ENCODE measurements at regions of chr7 and their contacts with region 1.

Region 1: GRCh38 chr7:35624299-35625186 is 70.4 kb downstream of the HERPUD2 start:
- DNase-seq: peak in 7 of 9 experiments; percentile 19 to 68 (median 37)
- ATAC-seq: peak; percentile 89
- H3K4me3 ChIP-seq: no peak overlapping the region
- H3K4me3 Mint-ChIP-seq: no peak overlapping the region
- H3K27ac ChIP-seq: no peak overlapping the region
- H3K27ac Mint-ChIP-seq: no peak overlapping the region
- H3K4me1 ChIP-seq: no peaks in the 10 kb centered on the region
- H3K4me1 Mint-ChIP-seq: peaks cover 3% of the 10 kb centered on the region
- H3K27me3 ChIP-seq: no peaks in the 10 kb centered on the region
- H3K27me3 Mint-ChIP-seq: no peaks in the 10 kb centered on the region
- CTCF ChIP-seq: peak; percentile 79

Region 2: DNA sequence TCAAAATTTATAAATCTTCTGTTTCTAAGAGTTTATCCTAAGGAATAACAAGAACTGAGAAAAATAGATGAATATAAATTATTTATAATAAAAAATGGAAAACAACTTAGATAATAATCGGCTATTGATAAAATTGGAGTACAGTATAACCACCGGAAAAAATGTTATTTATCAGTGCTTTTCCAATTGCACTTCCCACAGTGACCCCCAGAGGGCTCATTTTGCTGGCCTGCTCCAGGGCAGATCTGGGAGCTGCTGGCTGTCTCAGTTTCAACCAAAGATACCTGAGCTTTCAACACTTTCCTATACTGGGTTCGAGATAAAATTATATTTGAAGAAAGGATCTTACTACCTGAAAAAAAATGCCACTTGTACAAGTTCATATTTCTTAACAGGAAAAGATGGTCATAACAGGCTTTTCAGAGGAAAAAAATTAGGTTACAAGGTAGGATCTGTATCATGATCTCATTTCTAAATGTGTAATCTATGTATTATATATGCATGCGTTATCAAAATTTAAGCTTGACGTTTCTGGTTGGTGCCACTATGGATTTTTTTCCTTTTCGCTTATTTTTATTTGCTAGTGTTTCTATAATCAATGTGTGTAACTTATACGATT is 800.8 kb before region 1 on chr7:
- CTCF ChIA-PET with region 1: no interaction called
- POLR2A ChIA-PET with region 1: no interaction called
- intact Hi-C with region 1: loop called in 1 of 2 experiments (anchors 5 kb)
- DNase-seq: peak; percentile 15 to 67 (median 48)
- ATAC-seq: peak; percentile 56
- H3K4me3 ChIP-seq: no peak overlapping the region
- H3K4me3 Mint-ChIP-seq: no peak overlapping the region
- H3K27ac ChIP-seq: no peak overlapping the region
- H3K27ac Mint-ChIP-seq: no peak overlapping the region
- H3K4me1 ChIP-seq: no peaks in the 10 kb centered on the region
- H3K4me1 Mint-ChIP-seq: no peaks in the 10 kb centered on the region
- H3K27me3 ChIP-seq: no peaks in the 10 kb centered on the region
- H3K27me3 Mint-ChIP-seq: no peaks in the 10 kb centered on the region
- CTCF ChIP-seq: peak; percentile 84

Region 3: DNA sequence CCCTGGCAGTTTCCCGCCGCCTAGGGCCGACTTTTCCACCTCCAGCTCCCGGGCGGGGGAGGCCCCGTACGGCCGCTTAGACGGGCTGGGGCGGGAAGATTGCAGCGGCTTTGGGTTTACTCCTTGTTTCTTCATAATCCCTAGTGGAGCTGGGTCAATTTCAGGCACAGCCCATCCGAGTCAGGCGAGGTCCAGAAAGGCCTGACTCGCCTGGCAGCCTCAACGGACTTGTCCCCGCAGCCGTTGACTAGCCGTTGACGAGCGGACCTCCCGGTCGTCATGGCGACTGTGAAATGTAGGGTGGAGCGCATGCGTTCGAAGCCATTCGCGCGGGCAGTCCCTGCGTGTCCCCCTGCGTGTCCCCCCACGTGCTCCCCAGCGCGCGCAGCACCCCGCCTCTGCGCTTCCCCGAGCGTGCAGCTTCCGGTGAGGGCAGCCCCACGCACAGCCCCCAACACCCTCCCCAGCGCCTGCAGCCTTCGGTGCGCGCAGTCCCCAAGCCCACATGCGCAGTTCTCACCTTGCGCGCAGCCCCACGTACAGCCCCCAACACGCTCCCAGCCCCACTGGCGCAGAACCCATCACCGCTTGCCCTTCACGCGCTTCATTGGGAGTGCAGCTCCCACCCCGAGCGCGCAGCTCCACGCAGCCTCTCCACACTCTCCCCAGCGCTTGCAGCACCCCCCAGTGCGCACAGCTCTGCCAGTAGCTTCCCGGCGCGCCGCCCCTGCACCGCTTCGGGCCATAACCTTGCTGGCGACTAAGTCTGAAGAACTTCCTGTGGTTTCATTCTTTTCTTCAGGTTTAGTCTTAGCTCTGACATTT is 438.4 kb before region 1 on chr7:
- CTCF ChIA-PET with region 1: no interaction called
- POLR2A ChIA-PET with region 1: no interaction called
- intact Hi-C with region 1: loop called in 1 of 2 experiments (anchors 10 kb)
- DNase-seq: peak in 1 of 9 experiments; percentile 5
- ATAC-seq: no peak
- H3K4me3 ChIP-seq: no peak overlapping the region
- H3K4me3 Mint-ChIP-seq: peak overlapping the region; percentile 56
- H3K27ac ChIP-seq: no peak overlapping the region
- H3K27ac Mint-ChIP-seq: no peak overlapping the region
- H3K4me1 ChIP-seq: no peaks in the 10 kb centered on the region
- H3K4me1 Mint-ChIP-seq: peaks cover 8% of the 10 kb centered on the region
- H3K27me3 ChIP-seq: no peaks in the 10 kb centered on the region
- H3K27me3 Mint-ChIP-seq: peaks cover 15% of the 10 kb centered on the region
- CTCF ChIP-seq: no peak

Region 4: DNA sequence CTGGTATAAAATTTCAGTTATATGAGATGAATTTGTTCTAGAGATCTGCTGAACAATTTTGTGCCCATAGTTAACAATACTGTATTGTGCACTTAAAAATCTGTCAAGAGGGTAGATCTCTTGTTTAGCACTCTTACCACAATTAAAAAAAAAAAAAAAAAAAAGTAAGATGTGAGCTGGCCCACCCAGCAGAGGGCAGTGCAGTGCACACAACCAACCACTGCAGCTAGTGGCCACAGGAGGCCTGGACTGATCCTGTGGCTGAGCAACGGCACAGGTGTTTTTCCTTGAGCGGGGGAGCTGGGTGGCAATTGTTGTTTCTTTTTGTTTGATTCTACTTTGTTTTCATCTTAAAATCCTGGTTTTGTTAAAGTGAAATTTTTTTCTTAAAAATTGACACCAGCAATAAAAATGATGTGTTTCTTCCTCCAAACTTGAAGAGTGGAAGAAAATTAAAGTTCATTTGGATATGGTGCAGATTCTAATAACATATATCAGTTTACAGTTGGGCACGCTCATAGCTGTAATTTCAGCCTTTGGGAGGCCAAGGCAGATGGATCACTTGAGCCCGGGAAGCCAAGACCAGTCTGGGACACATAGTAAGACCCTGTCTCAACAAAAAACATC is 199.6 kb before region 1 on chr7:
- CTCF ChIA-PET with region 1: interaction called, 6 read pairs
- POLR2A ChIA-PET with region 1: no interaction called
- intact Hi-C with region 1: loop called (anchors 1 to 2 kb)
- DNase-seq: peak; percentile 9 to 74 (median 56)
- ATAC-seq: peak; percentile 86
- H3K4me3 ChIP-seq: no peak overlapping the region
- H3K4me3 Mint-ChIP-seq: no peak overlapping the region
- H3K27ac ChIP-seq: no peak overlapping the region
- H3K27ac Mint-ChIP-seq: no peak overlapping the region
- H3K4me1 ChIP-seq: no peaks in the 10 kb centered on the region
- H3K4me1 Mint-ChIP-seq: no peaks in the 10 kb centered on the region
- H3K27me3 ChIP-seq: no peaks in the 10 kb centered on the region
- H3K27me3 Mint-ChIP-seq: peaks cover 25% of the 10 kb centered on the region
- CTCF ChIP-seq: peak; percentile 75

Region 5: DNA sequence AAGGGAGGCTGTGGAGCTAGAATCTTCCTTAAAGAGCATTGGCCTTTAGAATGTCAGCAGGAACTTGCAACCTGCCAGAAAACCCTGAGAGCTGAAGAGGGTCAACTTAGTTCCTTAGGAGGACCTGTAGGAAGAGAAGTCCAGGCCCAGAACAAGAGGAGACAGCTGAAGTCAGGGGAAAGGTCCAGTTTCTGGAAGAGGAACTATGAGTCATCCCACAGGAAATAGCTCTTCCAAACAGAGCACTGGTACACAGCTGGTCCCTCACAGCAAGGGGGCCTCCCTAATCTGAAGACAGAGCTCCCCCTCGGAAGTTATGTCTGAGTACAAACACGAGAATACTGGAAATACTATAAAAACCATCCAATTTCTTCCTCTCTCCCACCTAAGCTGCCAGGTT is 28.5 kb before region 1 on chr7:
- CTCF ChIA-PET with region 1: interaction called, 10 read pairs
- POLR2A ChIA-PET with region 1: no interaction called
- intact Hi-C with region 1: no loop called
- DNase-seq: no peak
- ATAC-seq: no peak
- H3K4me3 ChIP-seq: no peak overlapping the region
- H3K4me3 Mint-ChIP-seq: no peak overlapping the region
- H3K27ac ChIP-seq: no peak overlapping the region
- H3K27ac Mint-ChIP-seq: no peak overlapping the region
- H3K4me1 ChIP-seq: no peaks in the 10 kb centered on the region
- H3K4me1 Mint-ChIP-seq: no peaks in the 10 kb centered on the region
- H3K27me3 ChIP-seq: no peaks in the 10 kb centered on the region
- H3K27me3 Mint-ChIP-seq: no peaks in the 10 kb centered on the region
- CTCF ChIP-seq: no peak

Region 6: DNA sequence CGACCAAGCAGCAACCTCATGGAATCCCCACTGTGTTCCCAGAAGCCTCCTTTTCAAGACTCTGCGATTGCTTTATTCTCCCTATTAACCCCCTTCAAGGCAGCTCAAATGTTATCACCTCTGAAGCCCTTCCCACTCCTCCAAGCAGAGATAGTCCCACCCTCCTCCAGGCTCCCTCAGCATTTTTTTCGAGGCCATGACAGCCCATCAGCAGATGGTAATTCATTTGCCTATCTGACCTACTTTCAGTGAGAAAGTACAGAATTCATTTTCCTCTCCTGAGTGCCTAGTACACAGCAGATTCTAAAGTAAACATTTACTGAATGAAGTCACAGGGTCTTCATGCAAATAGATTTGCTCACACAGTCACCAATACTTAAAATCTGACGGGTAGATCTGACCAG is 22.6 kb after region 1 on chr7:
- CTCF ChIA-PET with region 1: interaction called, 16 read pairs
- POLR2A ChIA-PET with region 1: no interaction called
- intact Hi-C with region 1: no loop called
- DNase-seq: no peak
- ATAC-seq: no peak
- H3K4me3 ChIP-seq: no peak overlapping the region
- H3K4me3 Mint-ChIP-seq: no peak overlapping the region
- H3K27ac ChIP-seq: no peak overlapping the region
- H3K27ac Mint-ChIP-seq: peak overlapping the region; percentile 15
- H3K4me1 ChIP-seq: peaks cover 39% of the 10 kb centered on the region
- H3K4me1 Mint-ChIP-seq: peaks cover 70% of the 10 kb centered on the region
- H3K27me3 ChIP-seq: no peaks in the 10 kb centered on the region
- H3K27me3 Mint-ChIP-seq: no peaks in the 10 kb centered on the region
- CTCF ChIP-seq: no peak

Region 7: GRCh38 chr7:35906191-35906908 is 281.8 kb after region 1 on chr7:
- CTCF ChIA-PET with region 1: interaction called, 10 read pairs
- POLR2A ChIA-PET with region 1: no interaction called
- intact Hi-C with region 1: loop called (anchors 5 kb)
- DNase-seq: peak; percentile 44 to 86 (median 69)
- ATAC-seq: peak; percentile 94
- H3K4me3 ChIP-seq: no peak overlapping the region
- H3K4me3 Mint-ChIP-seq: no peak overlapping the region
- H3K27ac ChIP-seq: no peak overlapping the region
- H3K27ac Mint-ChIP-seq: no peak overlapping the region
- H3K4me1 ChIP-seq: no peaks in the 10 kb centered on the region
- H3K4me1 Mint-ChIP-seq: peaks cover 19% of the 10 kb centered on the region
- H3K27me3 ChIP-seq: no peaks in the 10 kb centered on the region
- H3K27me3 Mint-ChIP-seq: no peaks in the 10 kb centered on the region
- CTCF ChIP-seq: peak; percentile 95

Measured in CD8-positive, alpha-beta T cell (primary cell).